SK-N-SH (cell line): ENCODE measurements at regions of chr7 and their contacts with region 1.

Region 1: DNA sequence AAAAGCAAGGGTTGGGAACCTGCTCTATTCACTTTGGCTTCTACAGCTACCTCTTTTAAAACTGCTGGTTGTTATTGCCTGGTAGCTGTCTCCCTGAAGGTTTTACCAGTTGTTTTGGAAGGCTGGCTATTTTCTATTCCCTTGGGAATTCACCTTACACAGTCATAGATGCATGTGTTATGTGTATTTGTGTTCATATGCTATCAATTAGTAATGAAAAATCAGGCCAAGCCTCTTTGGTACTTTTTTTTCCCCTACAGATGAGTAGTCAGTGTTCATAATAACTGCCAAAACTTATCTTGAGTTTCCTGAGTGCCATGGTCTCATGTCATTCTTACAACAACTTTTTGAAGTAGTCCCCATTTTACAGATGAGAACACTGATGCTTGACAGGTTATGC is 738.0 kb upstream of the GALNT17 start:
- DNase-seq: no peak
- H3K4me3 ChIP-seq: no peak overlapping the region
- H3K27ac ChIP-seq: no peak overlapping the region
- H3K4me1 ChIP-seq: peaks cover 11 to 21% of the 10 kb centered on the region in 2 experiments; a peak in 3 of 4 replicates
- H3K27me3 ChIP-seq: no peaks in the 10 kb centered on the region
- CTCF ChIP-seq: no peak
- EP300 ChIP-seq: no peak
- RAD21 ChIP-seq: no peak

Region 2: DNA sequence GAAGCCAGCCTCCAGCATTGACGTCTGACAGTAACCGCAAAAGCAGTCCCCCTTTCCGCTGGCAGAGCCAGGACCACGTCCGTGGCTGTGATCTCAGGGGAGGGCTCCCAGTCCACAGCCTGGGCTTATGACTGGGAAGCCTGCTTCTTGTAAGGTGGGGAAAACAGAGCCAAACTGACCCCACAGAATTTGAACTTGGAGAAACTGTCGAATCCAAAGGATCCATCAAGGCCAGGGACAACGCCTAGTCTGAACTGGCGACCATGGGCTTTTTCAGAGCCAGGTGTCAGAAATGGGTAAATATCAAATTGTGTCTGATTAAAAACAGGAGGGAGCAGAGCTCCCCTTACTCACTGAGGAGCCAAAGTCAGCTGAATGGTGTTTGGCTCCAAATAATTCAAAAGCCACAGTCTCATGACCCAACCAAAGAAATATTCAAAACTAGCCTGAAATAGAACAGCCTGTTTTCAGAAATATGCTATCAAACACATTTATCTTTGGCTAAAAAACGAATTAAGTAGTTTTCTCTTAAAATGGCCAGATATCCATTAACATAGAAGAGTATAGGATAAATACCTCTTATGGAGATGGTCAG is 13.4 kb before region 1 on chr7:
- CTCF ChIA-PET with region 1: interaction called, 10 read pairs
- POLR2A ChIA-PET with region 1: no interaction called
- DNase-seq: peak; percentile 19
- H3K4me3 ChIP-seq: peak overlapping the region in 1 of 2 experiments; percentile 20; a peak in 2 of 4 replicates
- H3K27ac ChIP-seq: peak overlapping the region; percentile 87 to 88
- H3K4me1 ChIP-seq: peaks cover 17 to 57% of the 10 kb centered on the region in 2 experiments
- H3K27me3 ChIP-seq: no peaks in the 10 kb centered on the region
- CTCF ChIP-seq: no peak
- EP300 ChIP-seq: peak; percentile 54 to 99
- RAD21 ChIP-seq: no peak

Region 3: GRCh38 chr7:70704831-70705346 is 310.9 kb after region 1 on chr7:
- CTCF ChIA-PET with region 1: no interaction called
- POLR2A ChIA-PET with region 1: no interaction called
- DNase-seq: no peak
- H3K4me3 ChIP-seq: no peak overlapping the region
- H3K27ac ChIP-seq: peak overlapping the region; percentile 52 to 69; a peak in 3 of 4 replicates
- H3K4me1 ChIP-seq: peaks cover 23 to 41% of the 10 kb centered on the region in 2 experiments; a peak in 3 of 4 replicates
- H3K27me3 ChIP-seq: no peaks in the 10 kb centered on the region
- CTCF ChIP-seq: no peak
- EP300 ChIP-seq: peak; percentile 46 to 76; a peak in 3 of 4 replicates
- RAD21 ChIP-seq: no peak